ENCODE measurements at regions of chr17 and their contacts with region 1.

Region 1: GRCh38 chr17:72118335-72119076 is 2.3 kb upstream of the SOX9 start:
- DNase-seq: no peak
- H3K4me3 ChIP-seq: peak overlapping the region in 1 of 8 donors; percentile 35
- H3K27ac ChIP-seq: no peak overlapping the region
- H3K4me1 ChIP-seq: peaks cover 5 to 66% (median 40%) of the 10 kb centered on the region in 6 donors
- H3K27me3 ChIP-seq: peaks cover 12 to 100% (median 82%) of the 10 kb centered on the region in 7 donors
- CTCF ChIP-seq: peak in 9 of 11 experiments; percentile 25 to 71 (median 62)
- POLR2A ChIP-seq: no peak

Region 2: GRCh38 chr17:71118039-71118438 is 1000.5 kb before region 1 on chr17:
- intact Hi-C with region 1: loop called (anchors 5 kb)
- DNase-seq: no peak
- H3K4me3 ChIP-seq: no peak overlapping the region
- H3K27ac ChIP-seq: no peak overlapping the region
- H3K4me1 ChIP-seq: no peaks in the 10 kb centered on the region
- H3K27me3 ChIP-seq: no peaks in the 10 kb centered on the region
- CTCF ChIP-seq: peak in 4 of 11 experiments; percentile 8 to 26 (median 20)
- POLR2A ChIP-seq: no peak

Region 3: GRCh38 chr17:72046643-72047612 is 71.6 kb before region 1 on chr17:
- intact Hi-C with region 1: no loop called
- DNase-seq: no peak
- H3K4me3 ChIP-seq: no peak overlapping the region
- H3K27ac ChIP-seq: no peak overlapping the region
- H3K4me1 ChIP-seq: no peaks in the 10 kb centered on the region
- H3K27me3 ChIP-seq: peaks cover 0 to 14% (median 0%) of the 10 kb centered on the region in 7 donors
- CTCF ChIP-seq: no peak
- POLR2A ChIP-seq: no peak

Measured in spleen (tissue), 13 donors.